Gastrocnemius medialis (tissue), 4 donors: ENCODE measurements at regions of chr12 and their contacts with region 1.

Region 1: GRCh38 chr12:75334384-75335030 is at the start of gene GLIPR1L1:
- DNase-seq: peak; percentile 42 to 68
- ATAC-seq: peak; percentile 76 to 78
- H3K4me3 ChIP-seq: peak within 1 kb of the TSS in 3 of 4 donors; percentile 29 to 51 (median 31)
- H3K27ac ChIP-seq: no peak within 1 kb of the TSS
- H3K4me1 ChIP-seq: peaks cover 6% of the 10 kb centered on the region in 2 donors
- H3K27me3 ChIP-seq: no peaks in the 10 kb centered on the region
- CTCF ChIP-seq: peak; percentile 61 to 88 (median 79)
- POLR2A ChIP-seq: no peak
- total RNA-seq, gene GLIPR1L1: not detected

Region 2: DNA sequence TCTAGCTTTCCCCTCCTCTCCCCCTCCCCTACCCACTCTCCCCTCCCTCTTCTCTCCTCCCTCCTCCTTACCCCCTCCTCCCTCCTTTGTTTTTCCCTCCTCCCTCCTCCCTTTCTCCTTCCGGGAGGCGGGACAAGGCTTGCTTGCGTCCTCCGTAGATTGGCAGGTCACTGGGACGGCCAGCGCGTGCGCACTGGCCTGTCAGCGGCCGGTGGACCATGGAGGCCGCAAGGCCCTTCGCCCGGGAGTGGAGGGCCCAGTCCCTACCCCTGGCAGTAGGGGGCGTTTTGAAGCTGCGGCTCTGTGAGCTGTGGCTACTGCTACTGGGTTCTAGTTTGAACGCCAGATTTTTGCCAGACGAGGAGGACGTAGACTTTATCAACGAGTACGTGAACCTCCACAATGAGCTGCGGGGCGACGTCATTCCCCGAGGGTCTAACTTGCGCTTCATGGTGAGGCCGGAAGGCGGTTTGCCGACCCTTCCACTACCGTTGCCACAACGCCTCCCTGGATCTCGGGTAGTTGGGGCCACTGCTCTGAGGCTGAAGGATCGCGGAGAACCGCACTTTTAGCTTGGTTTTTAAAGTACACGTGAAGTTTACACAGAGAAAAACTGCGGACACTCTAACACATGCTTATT is 56.5 kb after region 1 on chr12 and contains the start of gene GLIPR1L2:
- in situ Hi-C with region 1: loop called in 1 of 4 experiments (anchors 10 kb)
- intact Hi-C with region 1: loop called (anchors 2 kb)
- DNase-seq: peak; percentile 90 to 95
- ATAC-seq: peak; percentile 96 to 98
- H3K4me3 ChIP-seq: peak within 1 kb of the TSS; percentile 65 to 84 (median 76)
- H3K27ac ChIP-seq: peak within 1 kb of the TSS; percentile 84 to 93 (median 90)
- H3K4me1 ChIP-seq: peaks cover 23 to 24% of the 10 kb centered on the region in 2 donors
- H3K27me3 ChIP-seq: no peaks in the 10 kb centered on the region
- CTCF ChIP-seq: peak; percentile 73 to 86 (median 79)
- POLR2A ChIP-seq: peak; percentile 68 to 77
- total RNA-seq, gene GLIPR1L2: 0.33 to 1.0 (median 0.49) TPM in 3 of 4 donors, not detected in the other

Region 3: GRCh38 chr12:75505706-75506312 is 171.3 kb after region 1 on chr12:
- in situ Hi-C with region 1: loop called in 2 of 4 experiments (anchors 10 kb)
- intact Hi-C with region 1: loop called (anchors 2 kb)
- DNase-seq: no peak
- ATAC-seq: no peak
- H3K4me3 ChIP-seq: no peak overlapping the region
- H3K27ac ChIP-seq: no peak overlapping the region
- H3K4me1 ChIP-seq: peaks cover 20 to 33% of the 10 kb centered on the region in 2 donors
- H3K27me3 ChIP-seq: no peaks in the 10 kb centered on the region
- CTCF ChIP-seq: peak in 4 of 5 experiments; percentile 14 to 44 (median 26)
- POLR2A ChIP-seq: no peak